H1 (cell line): ENCODE measurements at regions of chr10 and their contacts with region 1.

Region 1: GRCh38 chr10:12656518-12657142 is 307.3 kb downstream of the CAMK1D start:
- DNase-seq: no peak
- H3K4me3 ChIP-seq: no peak overlapping the region
- H3K27ac ChIP-seq: no peak overlapping the region
- H3K4me1 ChIP-seq: no peaks in the 10 kb centered on the region
- H3K27me3 ChIP-seq: no peaks in the 10 kb centered on the region
- CTCF ChIP-seq: peak in 2 of 3 experiments; percentile 63 to 82; a peak in 2 of 4 replicates
- EP300 ChIP-seq: no peak
- POLR2A ChIP-seq: no peak
- RAD21 ChIP-seq: peak; percentile 86 to 92

Region 2: GRCh38 chr10:12264204-12264940 is 392.3 kb before region 1 on chr10:
- CTCF ChIA-PET with region 1: interaction called, 30 read pairs
- POLR2A ChIA-PET with region 1: no interaction called
- DNase-seq: peak; percentile 81 to 90
- H3K4me3 ChIP-seq: peak overlapping the region in 3 of 4 experiments; percentile 14 to 38 (median 35); a peak in 4 of 8 replicates
- H3K27ac ChIP-seq: no peak overlapping the region
- H3K4me1 ChIP-seq: peaks cover 0 to 3% (median 0%) of the 10 kb centered on the region in 4 experiments; a peak in 1 of 7 replicates
- H3K27me3 ChIP-seq: no peaks in the 10 kb centered on the region
- CTCF ChIP-seq: peak; percentile 78 to 91 (median 81)
- EP300 ChIP-seq: peak in 1 of 2 experiments; percentile 23; a peak in 1 of 3 replicates
- POLR2A ChIP-seq: no peak
- RAD21 ChIP-seq: peak; percentile 96 to 97

Region 3: DNA sequence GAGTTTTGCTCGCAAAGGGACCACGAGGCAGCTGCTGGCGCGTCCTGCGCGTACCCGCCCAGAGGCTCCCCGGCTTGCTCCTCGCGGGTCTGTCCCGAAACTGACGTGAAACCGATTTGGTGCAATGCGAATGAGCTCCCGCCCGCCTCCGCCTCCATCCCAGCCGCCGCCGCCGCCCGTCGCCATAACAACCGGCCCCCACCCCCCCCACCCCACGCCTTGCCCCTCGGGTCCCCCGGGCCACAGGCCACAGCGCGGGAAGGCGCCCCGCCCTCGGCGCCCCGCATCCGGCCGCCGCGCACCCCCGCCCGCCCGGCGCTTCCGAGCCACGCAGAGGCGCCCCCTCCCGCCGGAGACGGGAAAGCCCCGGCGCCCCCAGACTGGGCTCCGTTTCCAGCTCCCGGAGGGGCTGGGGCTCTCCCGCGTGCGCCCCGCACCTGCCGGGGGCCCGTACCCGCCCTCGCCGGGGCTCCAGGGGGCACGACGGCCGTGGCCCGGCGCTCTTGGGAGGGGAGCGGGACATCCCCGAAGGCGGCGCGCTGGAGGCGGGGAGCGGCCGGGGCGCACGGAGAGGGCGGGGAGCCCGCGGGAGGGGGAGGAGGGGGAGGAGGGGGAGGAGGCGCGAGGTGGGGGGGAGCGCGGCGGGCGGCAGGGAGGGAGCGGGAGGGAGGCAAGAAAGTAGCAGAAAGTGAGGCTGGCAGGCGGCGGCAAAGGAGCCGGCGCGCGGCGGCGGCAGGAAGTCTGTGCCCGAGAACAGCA is 307.6 kb before region 1 on chr10 and contains the start of gene CAMK1D:
- CTCF ChIA-PET with region 1: interaction called, 15 read pairs
- POLR2A ChIA-PET with region 1: no interaction called
- DNase-seq: peak; percentile 56 to 86
- H3K4me3 ChIP-seq: peak within 1 kb of the TSS; percentile 56 to 96 (median 86)
- H3K27ac ChIP-seq: no peak within 1 kb of the TSS; the same call in 1 of the 2 replicates
- H3K4me1 ChIP-seq: peaks cover 7 to 24% (median 9%) of the 10 kb centered on the region in 4 experiments
- H3K27me3 ChIP-seq: peaks cover 0 to 27% (median 24%) of the 10 kb centered on the region in 4 experiments; a peak in 6 of 7 replicates
- CTCF ChIP-seq: peak in 2 of 3 experiments; percentile 16 to 27; a peak in 2 of 4 replicates
- EP300 ChIP-seq: peak in 1 of 2 experiments; percentile 84; a peak in 1 of 3 replicates
- POLR2A ChIP-seq: peak in 1 of 2 experiments; percentile 37; a peak in 1 of 3 replicates
- RAD21 ChIP-seq: no peak; a peak in 1 of 4 replicates
- total RNA-seq, gene CAMK1D: 8.9 and 10.6 TPM in 2 replicates

Region 4: DNA sequence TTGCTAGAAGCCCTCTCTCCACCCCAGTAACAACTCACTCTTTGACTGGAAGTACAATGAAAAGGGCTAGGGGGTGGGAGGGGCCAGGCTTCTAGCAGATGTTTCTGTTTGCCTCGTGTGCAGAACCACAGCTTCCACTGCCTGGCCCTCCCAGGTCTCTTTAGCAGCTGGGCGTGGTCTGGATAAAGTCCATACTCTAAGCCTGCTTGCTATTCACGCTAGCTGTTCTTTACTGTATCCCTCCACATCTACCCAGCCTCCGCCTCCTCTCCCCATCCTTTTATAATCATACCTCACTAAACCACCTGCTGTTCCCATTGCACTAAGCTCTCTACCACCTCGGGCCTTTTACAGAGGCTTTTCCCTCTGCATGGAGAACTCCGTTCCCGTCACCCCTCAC is 18.5 kb before region 1 on chr10:
- CTCF ChIA-PET with region 1: interaction called, 24 read pairs
- POLR2A ChIA-PET with region 1: interaction called, 4 read pairs
- DNase-seq: no peak
- H3K4me3 ChIP-seq: no peak overlapping the region
- H3K27ac ChIP-seq: no peak overlapping the region
- H3K4me1 ChIP-seq: peaks cover 4 to 11% (median 7%) of the 10 kb centered on the region in 4 experiments; a peak in 6 of 7 replicates
- H3K27me3 ChIP-seq: no peaks in the 10 kb centered on the region
- CTCF ChIP-seq: no peak
- EP300 ChIP-seq: no peak
- POLR2A ChIP-seq: no peak
- RAD21 ChIP-seq: no peak

Region 5: GRCh38 chr10:12644380-12645144 is 12.1 kb before region 1 on chr10:
- CTCF ChIA-PET with region 1: interaction called, 24 read pairs
- POLR2A ChIA-PET with region 1: no interaction called
- DNase-seq: no peak
- H3K4me3 ChIP-seq: no peak overlapping the region
- H3K27ac ChIP-seq: no peak overlapping the region
- H3K4me1 ChIP-seq: no peaks in the 10 kb centered on the region
- H3K27me3 ChIP-seq: no peaks in the 10 kb centered on the region
- CTCF ChIP-seq: no peak
- EP300 ChIP-seq: no peak
- POLR2A ChIP-seq: no peak
- RAD21 ChIP-seq: no peak

Region 6: DNA sequence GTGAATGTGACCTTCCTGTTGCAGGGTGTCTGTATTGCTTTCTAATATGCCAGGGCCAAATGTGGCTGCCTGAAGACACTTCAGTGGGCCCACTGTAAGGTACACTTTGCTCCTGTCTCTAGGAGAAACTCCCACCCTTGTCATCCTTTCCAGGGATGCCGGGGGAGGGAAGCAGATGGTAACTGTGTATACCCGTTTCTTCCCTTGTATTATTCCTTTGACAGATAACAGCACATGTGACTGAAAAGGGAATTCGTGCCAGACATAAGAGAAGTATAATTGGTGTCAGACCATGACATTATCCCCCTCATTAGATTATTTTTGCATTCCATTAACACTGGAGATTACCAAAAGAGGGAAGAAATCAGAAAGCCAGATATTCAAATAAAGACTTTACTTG is 10.4 kb after region 1 on chr10:
- CTCF ChIA-PET with region 1: interaction called, 29 read pairs
- POLR2A ChIA-PET with region 1: no interaction called
- DNase-seq: no peak
- H3K4me3 ChIP-seq: no peak overlapping the region
- H3K27ac ChIP-seq: no peak overlapping the region
- H3K4me1 ChIP-seq: no peaks in the 10 kb centered on the region
- H3K27me3 ChIP-seq: peaks cover 0 to 1% (median 0%) of the 10 kb centered on the region in 4 experiments; a peak in 1 of 7 replicates
- CTCF ChIP-seq: no peak
- EP300 ChIP-seq: no peak
- POLR2A ChIP-seq: no peak
- RAD21 ChIP-seq: no peak